OCI-LY7 (cell line): ENCODE measurements at regions of chr11 and their contacts with region 1.

Region 1: DNA sequence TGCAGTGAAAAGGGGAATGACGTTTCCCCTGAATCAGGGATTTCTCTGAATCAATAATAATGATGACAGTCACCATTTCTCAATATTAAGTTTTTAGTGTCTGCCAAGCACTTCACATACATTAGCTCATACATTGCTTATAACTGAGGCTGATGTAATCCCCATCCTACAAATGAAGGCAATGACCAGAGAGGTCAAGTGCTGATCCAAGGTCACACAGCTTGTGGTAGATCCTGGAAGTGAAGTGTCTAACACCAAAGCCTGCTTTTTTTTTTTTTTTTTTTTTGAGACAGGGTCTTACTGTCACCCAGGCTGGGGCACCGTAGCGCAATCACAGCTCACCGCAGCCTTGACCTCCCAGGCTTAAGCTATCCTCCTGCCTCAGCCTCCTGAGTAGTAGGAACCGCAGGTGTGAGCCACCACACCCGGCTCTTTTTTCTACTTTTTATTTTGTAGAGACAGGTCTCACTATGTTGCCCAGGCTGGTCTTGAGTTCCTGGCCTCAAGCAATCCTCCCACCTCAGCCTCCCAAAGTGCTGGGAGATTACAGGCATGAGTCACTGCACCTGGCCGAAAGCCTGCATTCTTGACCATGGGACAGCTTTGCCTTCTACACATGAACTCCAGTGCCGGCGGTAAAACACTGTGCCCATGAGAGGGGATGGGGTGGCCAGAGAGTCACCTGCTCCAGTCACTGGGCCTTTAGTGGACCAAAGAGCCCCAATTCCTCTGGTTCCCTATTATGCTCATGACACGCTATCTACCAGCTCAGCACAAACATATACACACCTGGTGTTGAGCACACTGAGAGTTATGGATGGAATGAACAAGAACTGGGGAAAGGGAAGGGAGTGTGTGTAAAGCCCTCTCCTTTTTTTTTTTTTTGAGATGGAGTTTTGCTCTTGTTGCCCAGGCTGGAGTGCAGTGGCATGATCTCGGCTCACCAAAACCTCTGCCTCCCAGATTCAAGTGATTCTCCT is 17.4 kb downstream of the ARHGAP1 start:
- DNase-seq: no peak
- H3K4me3 ChIP-seq: no peak overlapping the region
- H3K27ac ChIP-seq: no peak overlapping the region
- H3K4me1 ChIP-seq: no peaks in the 10 kb centered on the region
- CTCF ChIP-seq: no peak

Region 2: GRCh38 chr11:46593550-46594373 is 89.3 kb before region 1 on chr11 and contains the start of gene AMBRA1:
- CTCF ChIA-PET with region 1: no interaction called
- POLR2A ChIA-PET with region 1: no interaction called
- intact Hi-C with region 1: no loop called
- DNase-seq: peak; percentile 94
- H3K4me3 ChIP-seq: peak within 1 kb of the TSS; percentile 85
- H3K27ac ChIP-seq: peak within 1 kb of the TSS; percentile 36
- H3K4me1 ChIP-seq: peaks cover 22% of the 10 kb centered on the region
- CTCF ChIP-seq: no peak
- total RNA-seq, gene AMBRA1: 21.8 and 24.6 TPM in 2 replicates

Region 3: GRCh38 chr11:46700241-46701077 is 17.4 kb after region 1 on chr11 and contains the starts of genes ARHGAP1 and ZNF408:
- CTCF ChIA-PET with region 1: no interaction called
- POLR2A ChIA-PET with region 1: interaction called, 11 read pairs
- intact Hi-C with region 1: no loop called
- DNase-seq: peak; percentile 99
- H3K4me3 ChIP-seq: peak within 1 kb of the TSS; percentile 92
- H3K27ac ChIP-seq: peak within 1 kb of the TSS; percentile 59
- H3K4me1 ChIP-seq: peaks cover 19% of the 10 kb centered on the region
- CTCF ChIP-seq: no peak
- total RNA-seq, gene ARHGAP1: 14.1 and 16.3 TPM in 2 replicates
- total RNA-seq, gene ZNF408: 7.2 and 15.2 TPM in 2 replicates

Region 4: GRCh38 chr11:46747150-46747549 is 64.1 kb after region 1 on chr11:
- CTCF ChIA-PET with region 1: no interaction called
- POLR2A ChIA-PET with region 1: no interaction called
- intact Hi-C with region 1: no loop called
- DNase-seq: no peak
- H3K4me3 ChIP-seq: no peak overlapping the region
- H3K27ac ChIP-seq: no peak overlapping the region
- H3K4me1 ChIP-seq: no peaks in the 10 kb centered on the region
- CTCF ChIP-seq: no peak